ENCODE measurements at regions of chr12 and their contacts with region 1.

Region 1: GRCh38 chr12:10749700-10750384 is 26.7 kb upstream of the YBX3 start:
- DNase-seq: peak; percentile 65
- H3K4me3 ChIP-seq: peak overlapping the region; percentile 51
- CTCF ChIP-seq: peak; percentile 80

Region 2: GRCh38 chr12:10235761-10236631 is 513.8 kb before region 1 on chr12:
- CTCF ChIA-PET with region 1: interaction called, 11 read pairs
- POLR2A ChIA-PET with region 1: no interaction called
- DNase-seq: no peak
- H3K4me3 ChIP-seq: no peak overlapping the region
- CTCF ChIP-seq: peak; percentile 77

Region 3: GRCh38 chr12:10716704-10717315 is 33.0 kb before region 1 on chr12:
- CTCF ChIA-PET with region 1: interaction called, 23 read pairs
- POLR2A ChIA-PET with region 1: no interaction called
- DNase-seq: peak; percentile 59
- H3K4me3 ChIP-seq: peak overlapping the region; percentile 24
- CTCF ChIP-seq: no peak

Region 4: DNA sequence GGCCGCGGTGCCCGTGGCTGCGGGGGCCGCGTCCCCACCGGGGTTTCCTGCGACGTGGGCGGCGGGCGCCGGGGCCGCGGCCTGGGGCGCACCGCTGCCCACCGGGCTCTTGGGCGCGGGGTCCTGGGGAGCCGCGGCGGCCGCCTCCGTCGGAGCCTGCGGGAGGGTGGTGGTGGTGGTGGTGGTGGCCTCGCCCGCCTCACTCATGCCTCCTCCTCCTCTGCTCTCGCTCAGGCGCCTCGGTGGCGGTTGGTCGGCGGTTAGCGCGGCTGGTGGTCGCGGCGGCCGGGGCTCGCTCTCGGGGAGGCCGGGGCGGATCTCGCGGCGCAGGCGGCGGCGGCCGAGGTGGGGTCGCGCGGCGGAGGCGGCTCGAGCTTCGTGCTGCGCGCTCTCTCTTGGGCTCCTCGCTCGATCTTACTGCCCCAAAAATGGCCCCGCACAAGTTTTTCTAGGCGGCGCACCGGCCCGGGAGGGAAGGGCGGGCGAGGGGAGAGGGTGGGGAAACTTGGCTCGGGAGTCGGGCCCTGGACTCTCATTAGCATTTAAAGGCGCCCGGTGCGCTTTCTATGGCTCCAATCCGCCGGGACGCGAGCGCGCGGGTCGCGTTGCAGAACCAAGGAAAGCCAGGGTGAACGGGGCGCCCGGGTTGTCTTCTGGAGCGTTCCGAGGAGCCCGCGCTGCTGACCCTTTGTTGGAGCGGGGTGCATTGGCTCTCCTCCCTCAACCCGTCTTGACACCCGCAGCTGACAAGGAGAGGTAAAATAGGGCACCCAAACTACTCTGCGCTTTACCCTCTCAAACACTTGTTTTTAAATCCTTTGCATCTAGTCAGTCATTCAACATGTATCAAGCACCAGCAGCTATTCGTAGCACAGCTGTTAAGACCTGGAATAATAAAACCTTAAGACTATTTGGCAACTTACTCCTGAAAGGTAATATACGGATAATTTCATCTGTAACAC is 26.7 kb before region 1 on chr12 and contains the start of gene YBX3:
- CTCF ChIA-PET with region 1: interaction called, 31 read pairs
- POLR2A ChIA-PET with region 1: interaction called, 3 read pairs
- DNase-seq: no peak
- H3K4me3 ChIP-seq: peak within 1 kb of the TSS; percentile 84
- CTCF ChIP-seq: no peak

Region 5: GRCh38 chr12:10732549-10732948 is 17.3 kb before region 1 on chr12:
- CTCF ChIA-PET with region 1: interaction called, 13 read pairs
- POLR2A ChIA-PET with region 1: no interaction called
- DNase-seq: no peak
- H3K4me3 ChIP-seq: no peak overlapping the region
- CTCF ChIP-seq: no peak

Region 6: DNA sequence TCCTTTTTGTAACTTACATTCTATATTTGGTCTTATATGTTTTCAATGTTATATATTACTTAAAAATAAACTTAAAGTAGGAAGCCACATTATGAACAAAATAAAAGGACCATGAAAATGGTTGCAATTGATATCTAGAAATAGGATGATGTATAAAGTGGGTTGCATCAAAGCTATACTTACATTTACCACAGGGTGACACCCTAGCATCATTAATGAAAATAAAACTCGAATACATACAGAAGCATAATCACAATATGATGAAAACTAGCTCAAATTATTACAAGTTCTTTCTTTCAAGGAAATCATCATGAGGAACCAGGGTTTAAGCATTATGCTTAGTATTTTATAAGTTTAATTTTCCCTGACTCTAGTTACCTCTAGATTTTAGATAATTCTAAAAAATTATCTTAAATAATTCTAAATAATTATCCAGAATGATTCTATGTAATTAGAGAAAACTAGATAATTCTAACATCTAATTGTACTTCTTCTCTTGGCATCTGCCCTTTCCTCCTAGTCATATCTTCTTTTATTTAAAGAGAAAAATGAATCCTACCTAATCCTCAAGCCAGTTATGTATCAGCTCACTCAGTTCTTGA is 21.4 kb after region 1 on chr12:
- CTCF ChIA-PET with region 1: interaction called, 25 read pairs
- POLR2A ChIA-PET with region 1: no interaction called
- DNase-seq: no peak
- H3K4me3 ChIP-seq: no peak overlapping the region
- CTCF ChIP-seq: peak; percentile 44